ENCODE measurements at regions of chr11 and their contacts with region 1.

Region 1: GRCh38 chr11:44029977-44030911 is 17.5 kb upstream of the ACCSL start:
- DNase-seq: no peak
- H3K4me3 ChIP-seq: no peak overlapping the region
- CTCF ChIP-seq: no peak

Region 2: GRCh38 chr11:43954241-43954640 is 76.0 kb before region 1 on chr11:
- CTCF ChIA-PET with region 1: no interaction called
- POLR2A ChIA-PET with region 1: no interaction called
- DNase-seq: no peak
- H3K4me3 ChIP-seq: no peak overlapping the region
- CTCF ChIP-seq: no peak

Region 3: DNA sequence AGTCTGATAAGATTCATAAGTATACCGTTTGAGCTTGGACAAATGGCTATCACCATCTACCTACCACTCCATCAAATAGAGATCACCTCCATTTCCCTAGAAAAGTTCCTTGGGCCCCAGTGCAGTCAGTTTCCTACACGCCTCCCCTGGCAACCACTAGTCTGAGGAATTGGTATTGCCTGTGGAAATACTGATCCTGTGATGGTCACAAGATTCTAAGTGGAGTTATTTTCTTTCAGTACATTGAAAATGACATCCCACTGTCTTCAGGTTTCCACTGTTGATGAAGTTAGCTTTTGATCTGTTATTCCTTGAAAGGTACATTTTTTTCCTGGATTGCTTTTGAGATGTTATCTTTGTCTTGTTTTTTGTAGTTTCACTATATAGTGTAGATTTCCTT is 12.9 kb after region 1 on chr11:
- CTCF ChIA-PET with region 1: interaction called, 20 read pairs
- POLR2A ChIA-PET with region 1: no interaction called
- DNase-seq: no peak
- H3K4me3 ChIP-seq: no peak overlapping the region
- CTCF ChIP-seq: no peak

Region 4: GRCh38 chr11:44398266-44399045 is 368.2 kb after region 1 on chr11:
- CTCF ChIA-PET with region 1: no interaction called
- POLR2A ChIA-PET with region 1: no interaction called
- DNase-seq: no peak
- H3K4me3 ChIP-seq: no peak overlapping the region
- CTCF ChIP-seq: no peak

Measured in AG04449 (cell line).